Heart left ventricle (tissue), 16 donors: ENCODE measurements at regions of chr6 and their contacts with region 1.

Region 1: GRCh38 chr6:33075568-33076405 is at the start of gene HLA-DPB1:
- DNase-seq: peak in 2 of 5 donors; percentile 27 to 37
- ATAC-seq: peak; percentile 76 to 87 (median 80)
- H3K4me3 ChIP-seq: peak within 1 kb of the TSS in 11 of 12 donors; percentile 6 to 81 (median 56)
- H3K27ac ChIP-seq: peak within 1 kb of the TSS; percentile 28 to 94 (median 78)
- H3K4me1 ChIP-seq: peaks cover 0 to 63% (median 6%) of the 10 kb centered on the region in 12 donors
- H3K27me3 ChIP-seq: no peaks in the 10 kb centered on the region
- CTCF ChIP-seq: no peak
- POLR2A ChIP-seq: no peak
- total RNA-seq, gene HLA-DPB1: 16.6 to 346 (median 30.7) TPM

Region 2: DNA sequence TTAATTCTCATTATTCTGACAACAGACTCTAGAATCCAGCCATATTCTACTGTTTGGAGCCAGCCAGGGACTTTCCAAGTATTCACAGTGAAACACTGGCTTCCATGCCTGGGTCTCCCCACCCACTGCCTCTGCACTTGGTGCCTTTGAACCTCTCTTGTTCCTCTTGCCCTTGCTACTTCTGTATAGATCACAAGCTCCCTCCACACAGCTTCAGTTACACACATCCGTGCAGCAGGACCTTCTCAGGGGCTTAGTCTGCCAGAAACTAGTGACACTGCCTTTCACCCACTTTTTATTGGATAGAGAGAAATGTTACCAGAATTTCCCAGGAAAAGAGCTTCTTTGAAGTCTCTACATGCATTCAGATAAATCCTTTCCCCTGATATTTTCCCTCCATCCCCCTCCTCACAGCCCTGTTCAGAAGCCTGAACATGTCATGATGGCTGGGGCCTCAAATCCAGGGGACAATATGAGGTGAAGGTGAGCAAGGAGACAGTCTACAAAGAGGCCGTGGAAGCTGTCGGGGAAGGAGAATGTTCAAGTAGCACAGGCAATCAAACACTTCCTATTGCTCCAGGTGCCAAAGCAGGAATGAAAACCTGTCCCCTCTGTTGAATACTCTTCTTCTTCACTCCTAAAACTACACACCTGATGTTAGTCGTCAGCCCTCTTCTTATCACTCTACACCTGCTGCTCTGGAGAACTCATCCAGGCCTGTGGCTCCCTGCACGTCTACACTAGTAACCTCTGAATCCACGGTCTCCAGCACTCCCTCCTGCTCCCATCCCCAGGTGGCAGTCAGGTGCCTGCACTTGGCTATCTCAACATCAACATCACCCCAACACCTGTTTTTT is 46.2 kb before region 1 on chr6:
- intact Hi-C with region 1: loop called in 1 of 10 experiments (anchors 5 kb)
- DNase-seq: peak in 3 of 5 donors; percentile 48 to 70 (median 61)
- ATAC-seq: peak; percentile 90 to 99 (median 94)
- H3K4me3 ChIP-seq: no peak overlapping the region
- H3K27ac ChIP-seq: peak overlapping the region; percentile 39 to 95 (median 81)
- H3K4me1 ChIP-seq: peaks cover 0 to 33% (median 0%) of the 10 kb centered on the region in 12 donors
- H3K27me3 ChIP-seq: peaks cover 0 to 5% (median 0%) of the 10 kb centered on the region in 9 donors
- CTCF ChIP-seq: no peak
- POLR2A ChIP-seq: no peak